ENCODE measurements at regions of chr6 and their contacts with region 1.

Region 1: GRCh38 chr6:4506774-4507173 is 269.4 kb upstream of the CDYL start:
- DNase-seq: no peak
- H3K4me3 ChIP-seq: no peak overlapping the region
- H3K27ac ChIP-seq: no peak overlapping the region
- H3K4me1 ChIP-seq: no peaks in the 10 kb centered on the region
- H3K27me3 ChIP-seq: no peaks in the 10 kb centered on the region
- CTCF ChIP-seq: no peak
- EP300 ChIP-seq: no peak
- POLR2A ChIP-seq: no peak

Region 2: DNA sequence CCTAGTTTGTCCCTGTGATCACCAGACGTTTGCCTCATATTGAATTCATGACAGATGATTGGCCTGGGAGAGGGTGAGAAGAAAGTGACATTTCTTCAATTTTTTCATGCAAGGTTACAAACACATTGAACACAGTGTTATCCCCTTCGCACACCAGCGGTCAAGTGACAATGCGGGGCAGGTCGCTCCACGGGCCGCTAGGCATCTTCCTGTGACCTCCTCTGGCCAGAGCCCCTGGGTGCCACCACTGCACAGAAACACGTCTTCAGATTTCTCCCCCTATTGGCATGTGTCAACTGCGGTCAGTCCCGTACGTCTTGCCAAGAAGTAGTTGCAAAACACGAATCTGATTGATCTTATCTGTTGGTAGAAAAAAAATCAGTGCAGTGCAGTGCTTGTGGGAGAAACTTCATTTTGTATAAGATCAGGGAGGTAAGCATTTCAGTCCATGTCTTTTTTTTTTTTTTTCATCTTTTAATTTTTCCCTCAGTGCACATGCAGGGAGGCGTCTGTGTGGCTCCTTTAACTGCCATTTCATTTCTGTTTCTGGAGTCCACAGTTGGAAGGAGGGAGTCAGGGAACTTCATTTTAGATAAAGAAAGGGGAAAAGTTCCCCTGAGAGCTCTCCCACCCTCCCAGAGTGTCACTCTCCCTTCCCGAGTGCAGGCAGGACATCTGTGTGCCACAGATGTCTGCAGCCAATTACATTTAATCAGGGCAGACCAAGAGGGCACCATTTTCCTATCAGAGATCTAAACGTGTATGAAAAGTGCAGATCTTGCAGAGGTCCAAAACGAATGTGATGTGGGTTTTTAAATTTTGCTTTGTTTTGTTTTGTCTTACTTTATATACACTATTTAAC is 852.1 kb before region 1 on chr6:
- intact Hi-C with region 1: loop called in 1 of 4 experiments (anchors 5 kb)
- DNase-seq: no peak
- H3K4me3 ChIP-seq: no peak overlapping the region
- H3K27ac ChIP-seq: no peak overlapping the region
- H3K4me1 ChIP-seq: no peaks in the 10 kb centered on the region
- H3K27me3 ChIP-seq: no peaks in the 10 kb centered on the region
- CTCF ChIP-seq: no peak
- EP300 ChIP-seq: no peak
- POLR2A ChIP-seq: no peak